Psoas muscle (tissue), 8 donors: ENCODE measurements at regions of chr10 and their contacts with region 1.

Region 1: GRCh38 chr10:89615824-89616223 is 29.2 kb downstream of the PANK1 start:
- DNase-seq: no peak
- ATAC-seq: no peak
- H3K4me3 ChIP-seq: no peak overlapping the region
- H3K27ac ChIP-seq: no peak overlapping the region
- H3K4me1 ChIP-seq: peaks cover 14% of the 10 kb centered on the region
- H3K27me3 ChIP-seq: no peaks in the 10 kb centered on the region
- CTCF ChIP-seq: no peak

Region 2: DNA sequence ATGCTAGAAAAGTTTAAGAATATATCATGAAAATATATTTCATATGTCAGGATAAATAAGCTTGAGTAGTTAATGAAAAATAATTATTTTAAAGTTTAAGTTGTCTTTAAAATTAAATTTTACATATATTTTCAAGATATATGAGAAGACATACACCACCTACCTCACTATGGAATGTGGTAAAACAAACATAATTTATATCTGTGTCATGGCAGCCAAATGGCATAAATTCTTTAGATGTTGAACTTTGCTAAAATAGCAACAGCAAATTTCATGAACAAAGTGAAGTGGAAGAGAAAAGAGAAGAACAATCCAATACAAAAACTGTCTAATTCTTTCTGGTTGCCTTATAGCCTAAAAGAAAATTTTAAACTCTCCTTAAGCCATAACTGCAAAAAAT is 40.8 kb before region 1 on chr10:
- intact Hi-C with region 1: loop called in 1 of 2 experiments (anchors 5 kb)
- DNase-seq: no peak
- ATAC-seq: no peak
- H3K4me3 ChIP-seq: no peak overlapping the region
- H3K27ac ChIP-seq: no peak overlapping the region
- H3K4me1 ChIP-seq: no peaks in the 10 kb centered on the region
- H3K27me3 ChIP-seq: no peaks in the 10 kb centered on the region
- CTCF ChIP-seq: no peak

Region 3: DNA sequence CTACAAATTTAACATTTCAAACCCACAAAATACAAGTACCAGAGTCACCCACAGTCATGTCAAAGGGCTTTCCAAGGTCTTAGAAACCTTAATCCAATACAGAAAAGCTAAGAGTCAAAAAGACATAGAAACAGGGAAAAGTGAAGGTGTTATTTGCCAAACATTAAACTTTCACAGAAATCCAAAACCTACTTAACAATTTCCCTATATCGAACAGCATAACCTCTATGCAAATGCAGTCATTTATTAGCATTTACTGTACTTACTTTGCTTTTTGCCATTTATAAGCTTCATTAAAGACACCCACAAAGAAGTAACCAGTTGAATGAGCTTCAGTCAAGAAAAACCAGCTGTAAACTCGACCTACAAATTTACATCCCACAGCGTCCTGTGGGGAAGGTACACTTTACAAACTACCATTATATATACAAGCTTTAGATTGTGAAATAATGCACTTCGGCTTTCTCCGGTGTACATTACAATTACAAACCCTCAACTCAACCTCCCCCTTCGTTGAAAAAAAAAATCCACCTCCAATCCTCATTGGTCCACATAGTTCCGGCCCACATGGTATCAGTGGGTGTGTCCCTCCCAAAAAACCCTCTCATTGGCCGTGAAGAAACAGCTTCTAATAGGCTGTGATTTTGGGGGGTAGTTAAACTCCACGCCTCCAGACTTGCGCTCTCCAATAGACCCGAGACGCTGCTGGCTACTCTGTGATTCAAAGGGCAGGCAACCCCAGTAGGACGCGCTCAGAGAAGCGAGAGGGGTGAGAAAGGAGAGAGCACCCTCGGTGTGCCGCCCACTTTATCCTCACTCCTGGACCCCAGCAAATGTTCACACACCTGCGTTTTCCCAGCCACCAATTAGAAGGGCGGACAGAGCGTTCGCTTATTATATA is 27.9 kb after region 1 on chr10:
- intact Hi-C with region 1: no loop called
- DNase-seq: peak; percentile 60 to 84
- ATAC-seq: peak; percentile 71 to 83 (median 78)
- H3K4me3 ChIP-seq: peak overlapping the region; percentile 94
- H3K27ac ChIP-seq: peak overlapping the region; percentile 93
- H3K4me1 ChIP-seq: peaks cover 51% of the 10 kb centered on the region
- H3K27me3 ChIP-seq: no peaks in the 10 kb centered on the region
- CTCF ChIP-seq: no peak